ENCODE measurements at regions of chr3 and their contacts with region 1.

Region 1: GRCh38 chr3:28521663-28522062 is 173.0 kb upstream of the AZI2 start:
- DNase-seq: no peak
- H3K4me3 Mint-ChIP-seq: no peak overlapping the region
- H3K27ac Mint-ChIP-seq: no peak overlapping the region
- H3K4me1 Mint-ChIP-seq: no peaks in the 10 kb centered on the region
- H3K27me3 Mint-ChIP-seq: no peaks in the 10 kb centered on the region

Region 2: DNA sequence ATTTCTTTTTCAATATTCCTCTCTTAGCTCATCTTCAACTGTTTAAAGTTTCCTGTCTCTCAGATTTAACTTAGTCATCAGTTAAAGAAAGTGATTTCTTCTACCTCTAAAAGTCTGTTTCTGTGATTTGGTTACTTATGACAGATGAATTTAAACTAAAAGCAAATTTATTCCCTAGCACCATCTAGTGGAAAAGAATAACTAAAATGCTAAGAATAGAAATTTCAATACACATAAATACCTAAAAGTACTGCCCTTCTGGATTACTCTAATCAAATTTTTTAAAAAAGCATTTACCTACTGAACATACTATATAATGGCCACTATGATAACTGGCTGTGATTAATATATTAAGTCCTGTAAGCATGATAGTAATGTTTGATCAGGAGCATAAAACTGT is 187.1 kb before region 1 on chr3:
- CTCF ChIA-PET with region 1: no interaction called
- POLR2A ChIA-PET with region 1: no interaction called
- intact Hi-C with region 1: no loop called
- DNase-seq: no peak
- H3K4me3 Mint-ChIP-seq: no peak overlapping the region
- H3K27ac Mint-ChIP-seq: no peak overlapping the region
- H3K4me1 Mint-ChIP-seq: peaks cover 5% of the 10 kb centered on the region
- H3K27me3 Mint-ChIP-seq: no peaks in the 10 kb centered on the region

Region 3: GRCh38 chr3:28547677-28548076 is 26.0 kb after region 1 on chr3:
- CTCF ChIA-PET with region 1: no interaction called
- POLR2A ChIA-PET with region 1: no interaction called
- intact Hi-C with region 1: loop called (anchors 1 kb)
- DNase-seq: no peak
- H3K4me3 Mint-ChIP-seq: no peak overlapping the region
- H3K27ac Mint-ChIP-seq: no peak overlapping the region
- H3K4me1 Mint-ChIP-seq: no peaks in the 10 kb centered on the region
- H3K27me3 Mint-ChIP-seq: no peaks in the 10 kb centered on the region

Region 4: GRCh38 chr3:28799084-28799483 is 277.4 kb after region 1 on chr3:
- CTCF ChIA-PET with region 1: no interaction called
- POLR2A ChIA-PET with region 1: no interaction called
- intact Hi-C with region 1: no loop called
- DNase-seq: no peak
- H3K4me3 Mint-ChIP-seq: no peak overlapping the region
- H3K27ac Mint-ChIP-seq: no peak overlapping the region
- H3K4me1 Mint-ChIP-seq: no peaks in the 10 kb centered on the region
- H3K27me3 Mint-ChIP-seq: no peaks in the 10 kb centered on the region

Measured in activated CD4-positive, alpha-beta memory T cell treated with anti-CD3 and anti-CD28 coated beads for 36 hours (primary cell).